Common myeloid progenitor, CD34-positive (primary cell): ENCODE measurements at regions of chr6 and their contacts with region 1.

Region 1: GRCh38 chr6:125769147-125769783 is 19.8 kb downstream of the HEY2 start:
- DNase-seq: no peak
- H3K4me3 ChIP-seq: no peak overlapping the region
- H3K27ac ChIP-seq: no peak overlapping the region
- H3K4me1 ChIP-seq: no peaks in the 10 kb centered on the region
- H3K27me3 ChIP-seq: peaks cover 0 to 18% (median 5%) of the 10 kb centered on the region in 5 experiments

Region 2: DNA sequence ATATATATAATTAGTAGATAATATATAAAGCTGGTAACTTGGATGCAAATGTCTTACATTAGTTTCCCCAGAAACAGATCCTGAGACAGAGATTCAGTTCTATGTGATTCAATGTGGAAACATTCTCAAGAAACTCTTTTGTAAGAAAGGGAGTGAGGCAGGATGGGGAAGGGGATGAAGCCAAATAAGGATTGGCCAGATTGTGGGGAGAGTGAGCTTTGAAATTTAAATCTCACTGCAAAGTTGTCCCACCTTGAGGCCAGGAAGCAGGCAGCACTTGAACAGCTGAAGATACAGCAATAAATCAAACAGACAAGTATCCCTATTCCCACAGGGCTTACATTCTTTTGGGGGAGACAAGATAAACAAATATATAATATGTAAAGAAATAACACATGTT is 146.2 kb before region 1 on chr6:
- CTCF ChIA-PET with region 1: no interaction called
- POLR2A ChIA-PET with region 1: no interaction called
- DNase-seq: no peak
- H3K4me3 ChIP-seq: no peak overlapping the region
- H3K27ac ChIP-seq: no peak overlapping the region
- H3K4me1 ChIP-seq: no peaks in the 10 kb centered on the region
- H3K27me3 ChIP-seq: peaks cover 0 to 8% (median 2%) of the 10 kb centered on the region in 5 experiments

Region 3: DNA sequence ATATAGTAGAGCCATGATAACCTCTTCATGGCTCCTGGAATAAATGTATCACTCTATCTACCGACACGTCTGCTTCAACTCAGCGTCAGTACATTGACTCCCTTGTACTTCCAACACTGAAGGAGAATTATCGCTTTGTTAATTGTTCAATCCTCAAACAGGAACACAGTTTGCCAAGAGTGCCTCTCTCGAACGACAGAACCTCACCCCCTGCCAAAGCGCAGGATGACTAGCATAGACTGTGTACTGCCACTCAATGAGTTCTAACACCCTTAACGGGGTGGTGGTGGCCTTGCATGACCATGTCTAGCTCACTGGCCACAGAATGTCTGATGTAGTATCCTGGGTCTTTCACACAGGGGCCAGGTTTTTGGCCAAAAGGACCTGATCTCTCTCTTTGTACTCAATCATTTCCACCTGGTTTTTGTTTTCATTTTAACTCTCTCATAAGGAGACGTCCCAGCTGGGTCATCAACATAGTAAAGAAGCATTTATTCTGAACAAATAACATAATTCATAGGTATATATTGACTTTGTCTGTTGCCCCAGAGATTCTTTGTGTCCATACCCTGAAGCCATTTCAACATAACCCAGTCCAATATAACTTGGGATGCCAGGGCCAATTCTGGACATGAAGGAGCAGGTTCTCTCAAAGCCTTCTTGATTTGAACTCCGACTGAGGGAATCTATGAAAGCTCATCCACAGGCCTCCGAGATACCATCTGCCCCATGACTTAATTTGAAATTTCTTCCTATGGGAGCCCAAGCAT is 101.0 kb before region 1 on chr6:
- CTCF ChIA-PET with region 1: no interaction called
- POLR2A ChIA-PET with region 1: no interaction called
- DNase-seq: no peak
- H3K4me3 ChIP-seq: no peak overlapping the region
- H3K27ac ChIP-seq: no peak overlapping the region
- H3K4me1 ChIP-seq: no peaks in the 10 kb centered on the region
- H3K27me3 ChIP-seq: peaks cover 0 to 4% (median under 1%) of the 10 kb centered on the region in 5 experiments

Region 4: DNA sequence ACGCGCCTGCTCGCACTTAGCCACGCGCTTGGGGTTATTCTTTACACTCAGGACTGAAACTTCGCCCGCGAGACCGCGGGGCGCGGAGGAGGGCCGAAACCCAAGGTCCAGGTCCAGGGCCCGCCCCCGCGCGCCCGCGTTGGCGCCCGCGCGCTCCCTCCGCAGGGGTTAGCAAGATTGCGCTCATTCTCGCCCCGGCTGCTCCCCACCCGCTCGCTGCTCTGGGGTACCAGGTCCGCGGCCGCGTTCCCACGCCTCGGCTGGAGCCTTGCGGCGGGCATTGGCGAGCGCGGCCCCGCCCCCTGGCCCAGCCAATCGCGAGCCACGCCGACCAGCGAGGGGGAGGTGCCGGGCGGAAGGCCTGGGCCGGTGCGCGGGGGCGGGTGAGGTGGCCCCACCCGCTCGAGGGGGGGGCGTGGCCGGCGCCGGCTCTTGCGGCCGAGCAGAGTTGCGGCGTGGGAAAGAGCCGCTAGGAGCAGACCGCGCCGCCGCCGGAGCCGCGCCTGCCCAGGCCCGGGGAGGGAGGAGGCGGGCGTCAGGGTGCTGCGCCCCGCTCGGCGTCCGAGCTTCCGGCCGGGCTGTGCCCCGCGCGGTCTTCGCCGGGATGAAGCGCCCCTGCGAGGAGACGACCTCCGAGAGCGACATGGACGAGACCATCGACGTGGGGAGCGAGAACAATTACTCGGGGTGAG is 19.9 kb before region 1 on chr6 and contains the start of gene HEY2:
- CTCF ChIA-PET with region 1: interaction called, 14 read pairs
- POLR2A ChIA-PET with region 1: no interaction called
- DNase-seq: peak; percentile 84 to 90 (median 85)
- H3K4me3 ChIP-seq: peak within 1 kb of the TSS; percentile 45 to 79 (median 67)
- H3K27ac ChIP-seq: no peak within 1 kb of the TSS
- H3K4me1 ChIP-seq: peaks cover 19 to 40% (median 35%) of the 10 kb centered on the region in 4 experiments
- H3K27me3 ChIP-seq: peaks cover 31 to 92% (median 63%) of the 10 kb centered on the region in 5 experiments

Region 5: GRCh38 chr6:126721581-126722145 is 952.4 kb after region 1 on chr6:
- CTCF ChIA-PET with region 1: no interaction called
- POLR2A ChIA-PET with region 1: no interaction called
- DNase-seq: no peak
- H3K4me3 ChIP-seq: no peak overlapping the region
- H3K27ac ChIP-seq: no peak overlapping the region
- H3K4me1 ChIP-seq: no peaks in the 10 kb centered on the region
- H3K27me3 ChIP-seq: no peaks in the 10 kb centered on the region